ENCODE measurements at regions of chr11 and their contacts with region 1.

Region 1: GRCh38 chr11:46382589-46383403 is 1.3 kb downstream of the MDK start:
- DNase-seq: no peak
- H3K4me3 ChIP-seq: no peak overlapping the region
- H3K27me3 ChIP-seq: no peaks in the 10 kb centered on the region
- CTCF ChIP-seq: peak; percentile 61

Region 2: DNA sequence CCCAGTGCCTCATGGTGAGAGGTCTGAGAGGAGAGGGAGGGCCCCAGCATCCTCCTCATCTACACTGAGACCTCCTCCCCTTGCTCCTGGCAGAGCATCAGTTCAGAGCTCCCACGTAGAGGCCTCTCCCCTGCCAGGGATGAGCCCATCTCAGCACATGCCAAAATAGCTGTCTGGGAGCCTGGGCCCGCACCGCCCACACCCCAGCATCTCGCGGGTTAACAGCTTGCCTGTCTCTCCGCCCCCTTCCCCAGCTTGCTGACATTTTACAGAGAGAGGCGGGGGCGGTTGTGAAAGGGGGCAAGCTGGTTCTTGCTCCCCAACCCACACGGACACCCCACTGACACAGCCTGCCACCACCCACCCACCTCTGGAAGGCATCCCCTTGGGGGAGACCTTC is 29.1 kb before region 1 on chr11:
- CTCF ChIA-PET with region 1: no interaction called
- POLR2A ChIA-PET with region 1: no interaction called
- DNase-seq: no peak
- H3K4me3 ChIP-seq: no peak overlapping the region
- H3K27me3 ChIP-seq: no peaks in the 10 kb centered on the region
- CTCF ChIP-seq: no peak

Region 3: GRCh38 chr11:46367244-46367915 is 15.4 kb before region 1 on chr11:
- CTCF ChIA-PET with region 1: interaction called, 51 read pairs
- POLR2A ChIA-PET with region 1: interaction called, 3 read pairs
- DNase-seq: no peak
- H3K4me3 ChIP-seq: no peak overlapping the region
- H3K27me3 ChIP-seq: no peaks in the 10 kb centered on the region
- CTCF ChIP-seq: peak; percentile 90

Region 4: DNA sequence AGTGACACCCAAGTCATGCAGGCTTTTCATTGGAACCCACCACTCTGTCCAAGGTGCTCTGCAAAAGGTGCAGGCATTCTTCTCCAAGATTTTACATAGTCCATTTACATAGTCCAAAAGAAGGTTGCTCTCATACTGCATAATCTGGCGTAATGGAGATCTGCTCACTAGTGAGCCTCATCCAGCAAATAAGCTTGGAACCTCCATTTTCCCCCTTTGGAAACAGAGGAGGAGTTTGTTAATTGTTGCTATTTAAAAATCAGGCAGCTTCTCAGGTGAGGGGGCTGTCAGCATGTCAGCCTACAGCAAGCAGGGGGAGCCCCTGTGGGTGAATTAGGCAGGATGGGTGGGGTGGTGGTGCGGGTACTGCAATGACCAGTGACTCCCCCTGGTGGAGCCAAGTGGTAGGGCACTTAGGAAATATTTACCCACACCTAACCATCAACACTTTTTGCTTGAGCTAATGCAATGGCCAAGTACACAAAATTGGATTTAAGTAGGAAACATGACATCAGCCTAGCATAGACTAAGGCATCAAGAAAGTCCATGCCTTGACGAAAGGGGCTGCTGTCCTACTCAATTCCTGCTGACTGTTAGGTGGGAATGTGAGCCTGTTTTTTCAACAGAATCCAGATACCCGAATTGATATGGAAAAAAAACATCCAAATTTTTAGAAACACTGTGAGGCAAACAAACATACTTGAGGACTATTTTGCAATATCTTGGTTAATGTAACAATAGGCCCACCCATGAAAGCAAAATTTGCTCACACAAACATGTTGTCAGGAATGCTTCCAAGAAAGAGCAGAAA is 146.5 kb after region 1 on chr11:
- CTCF ChIA-PET with region 1: interaction called, 30 read pairs
- POLR2A ChIA-PET with region 1: no interaction called
- DNase-seq: no peak
- H3K4me3 ChIP-seq: no peak overlapping the region
- H3K27me3 ChIP-seq: no peaks in the 10 kb centered on the region
- CTCF ChIP-seq: peak; percentile 95